Activated naive CD8-positive, alpha-beta T cell treated with anti-CD3 and anti-CD28 coated beads, Interleukin-2, amount 10 ng/mL, durations not matched to agents 7 days and 5 days (primary cell): ENCODE measurements at regions of chr14 and their contacts with region 1.

Region 1: DNA sequence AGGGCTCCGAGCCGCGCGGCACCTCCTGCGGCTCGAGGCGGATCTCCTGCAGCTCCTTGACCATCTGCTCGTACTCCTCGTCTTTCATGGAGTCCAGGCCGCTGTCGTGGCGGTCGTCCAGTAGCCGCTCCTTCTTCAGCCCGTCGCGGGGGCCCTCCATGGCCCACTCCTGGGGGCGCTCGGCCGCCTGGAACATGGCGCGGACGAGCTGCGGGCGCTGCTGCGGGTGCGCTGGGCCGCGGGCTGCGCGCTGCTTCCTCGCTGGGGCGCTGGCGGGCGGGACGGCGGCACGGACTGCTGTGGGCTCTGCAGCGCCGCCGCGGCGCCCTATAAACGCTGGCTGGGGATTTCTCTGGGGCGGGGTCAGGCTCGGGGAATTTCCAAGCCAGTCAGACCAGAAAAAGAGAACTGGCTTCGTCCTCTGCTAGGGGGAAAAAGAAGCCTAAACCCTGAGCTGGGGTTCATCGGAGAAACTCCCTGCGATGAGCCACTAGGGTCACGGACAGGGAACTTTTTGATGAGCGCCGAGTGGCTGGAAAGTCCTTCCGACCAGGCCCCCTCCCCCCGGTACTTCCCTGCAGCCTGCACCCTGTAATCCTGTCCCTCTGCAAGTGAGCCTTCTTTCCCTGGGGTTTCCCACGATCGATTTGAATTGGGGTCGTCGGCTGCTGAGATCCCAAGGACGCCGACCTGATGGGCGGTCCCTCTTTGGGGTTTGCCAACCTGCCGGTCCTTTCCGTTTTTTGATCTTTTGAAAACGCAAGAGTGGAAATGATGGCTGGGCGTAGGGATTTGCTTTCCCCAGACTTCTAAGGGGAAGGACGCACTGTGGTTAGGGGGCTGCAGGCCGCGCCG is at the start of gene NFKBIA:
- DNase-seq: peak; percentile 94
- ATAC-seq: peak; percentile 72
- H3K4me3 Mint-ChIP-seq: peak within 1 kb of the TSS; percentile 92
- H3K27ac Mint-ChIP-seq: peak within 1 kb of the TSS; percentile 96
- H3K4me1 Mint-ChIP-seq: peaks cover 47% of the 10 kb centered on the region
- H3K27me3 Mint-ChIP-seq: no peaks in the 10 kb centered on the region
- total RNA-seq, gene NFKBIA: 85.5 to 88.1 TPM

Region 2: GRCh38 chr14:35121887-35122695 is 282.6 kb before region 1 on chr14 and contains the starts of genes PPP2R3C and PRORP:
- POLR2A ChIA-PET with region 1: interaction called, 32 read pairs
- DNase-seq: peak; percentile 86
- ATAC-seq: peak; percentile 91
- H3K4me3 Mint-ChIP-seq: peak within 1 kb of the TSS; percentile 96
- H3K27ac Mint-ChIP-seq: peak within 1 kb of the TSS; percentile 99
- H3K4me1 Mint-ChIP-seq: peaks cover 40% of the 10 kb centered on the region
- H3K27me3 Mint-ChIP-seq: no peaks in the 10 kb centered on the region
- total RNA-seq, gene PPP2R3C: 34.0 to 39.1 TPM
- total RNA-seq, gene PRORP: 27.8 to 30.2 TPM

Region 3: DNA sequence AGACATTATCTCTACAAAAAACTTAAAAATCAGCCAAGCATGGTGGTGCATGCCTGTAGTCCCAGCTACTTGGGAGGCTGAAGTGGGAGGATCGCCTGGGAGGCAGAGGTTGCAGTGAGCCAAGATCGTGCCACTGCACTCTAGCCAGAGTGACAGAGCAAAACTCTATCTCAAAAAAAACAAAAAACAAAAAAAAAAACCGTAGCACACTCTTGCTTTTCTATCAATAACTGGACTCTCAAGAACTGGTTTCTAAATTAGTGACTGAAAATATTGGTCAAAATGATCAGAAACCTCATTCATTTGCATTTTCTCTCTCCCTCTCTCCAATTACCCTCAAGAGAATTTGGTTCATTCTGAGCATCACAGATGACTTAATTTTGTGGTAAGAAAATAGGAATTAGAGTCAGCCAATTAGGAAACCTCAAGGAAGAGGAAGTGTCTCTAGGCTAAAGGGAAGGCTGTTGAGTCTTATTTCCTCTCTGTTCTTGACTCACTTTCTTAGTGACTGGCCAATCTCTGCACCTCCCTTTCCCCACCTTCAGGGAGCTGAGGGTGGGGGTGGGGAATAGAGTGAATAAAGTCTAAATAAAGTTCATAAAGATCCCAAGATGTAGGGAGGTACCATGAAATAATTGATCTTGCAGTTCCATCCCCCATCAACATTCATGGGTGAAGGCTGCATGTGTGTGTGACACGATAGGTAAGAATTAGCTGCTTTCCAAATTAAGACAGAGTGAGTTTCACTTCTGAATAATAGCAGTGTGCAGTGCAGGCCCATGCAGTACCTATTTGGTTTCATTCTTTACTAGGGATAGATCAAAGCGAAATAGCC is 119.3 kb before region 1 on chr14:
- POLR2A ChIA-PET with region 1: interaction called, 127 read pairs
- DNase-seq: no peak
- ATAC-seq: peak; percentile 79
- H3K4me3 Mint-ChIP-seq: peak overlapping the region; percentile 78
- H3K27ac Mint-ChIP-seq: peak overlapping the region; percentile 91
- H3K4me1 Mint-ChIP-seq: peaks cover 41% of the 10 kb centered on the region
- H3K27me3 Mint-ChIP-seq: no peaks in the 10 kb centered on the region

Region 4: GRCh38 chr14:35320472-35320871 is 84.2 kb before region 1 on chr14:
- POLR2A ChIA-PET with region 1: interaction called, 11 read pairs
- DNase-seq: no peak
- ATAC-seq: no peak
- H3K4me3 Mint-ChIP-seq: no peak overlapping the region
- H3K27ac Mint-ChIP-seq: peak overlapping the region; percentile 45
- H3K4me1 Mint-ChIP-seq: peaks cover 8% of the 10 kb centered on the region
- H3K27me3 Mint-ChIP-seq: no peaks in the 10 kb centered on the region

Region 5: GRCh38 chr14:35341446-35342159 is 63.1 kb before region 1 on chr14:
- POLR2A ChIA-PET with region 1: interaction called, 50 read pairs
- DNase-seq: no peak
- ATAC-seq: peak; percentile 51
- H3K4me3 Mint-ChIP-seq: peak overlapping the region; percentile 13
- H3K27ac Mint-ChIP-seq: peak overlapping the region; percentile 79
- H3K4me1 Mint-ChIP-seq: peaks cover 31% of the 10 kb centered on the region
- H3K27me3 Mint-ChIP-seq: no peaks in the 10 kb centered on the region

Region 6: DNA sequence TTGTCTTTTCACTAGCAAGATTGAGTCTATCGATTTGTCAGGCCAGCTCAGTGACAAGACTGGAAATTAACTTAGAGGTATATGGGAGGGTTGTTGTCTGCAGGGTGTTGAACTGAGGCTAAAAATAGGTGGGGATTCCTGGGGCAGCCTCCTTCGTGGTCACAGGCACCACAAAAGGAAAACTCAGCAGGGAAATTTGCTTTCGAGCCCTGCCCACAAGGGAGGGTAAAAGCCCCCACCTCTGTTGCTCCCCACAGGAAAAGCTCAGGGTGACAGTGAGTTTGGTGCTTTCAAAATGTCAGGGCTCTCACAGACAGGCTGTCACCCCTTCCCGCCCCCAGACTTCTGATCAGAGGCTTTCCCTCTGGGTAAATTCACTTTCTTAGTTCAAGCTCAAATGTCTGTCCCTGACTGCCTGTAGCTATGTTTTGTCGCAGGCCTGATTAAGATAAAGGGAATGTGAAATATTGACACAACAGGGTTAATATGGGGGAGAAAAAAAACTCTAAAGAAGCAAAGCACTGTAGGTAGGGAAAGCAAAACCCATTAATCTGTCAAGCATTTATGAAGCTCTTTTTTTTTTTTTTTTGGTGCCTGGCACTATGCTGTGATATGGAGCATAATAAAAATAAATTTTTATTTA is 11.6 kb after region 1 on chr14:
- POLR2A ChIA-PET with region 1: interaction called, 75 read pairs
- DNase-seq: peak; percentile 51
- ATAC-seq: peak; percentile 32
- H3K4me3 Mint-ChIP-seq: peak overlapping the region; percentile 56
- H3K27ac Mint-ChIP-seq: peak overlapping the region; percentile 70
- H3K4me1 Mint-ChIP-seq: peaks cover 33% of the 10 kb centered on the region
- H3K27me3 Mint-ChIP-seq: no peaks in the 10 kb centered on the region

Region 7: DNA sequence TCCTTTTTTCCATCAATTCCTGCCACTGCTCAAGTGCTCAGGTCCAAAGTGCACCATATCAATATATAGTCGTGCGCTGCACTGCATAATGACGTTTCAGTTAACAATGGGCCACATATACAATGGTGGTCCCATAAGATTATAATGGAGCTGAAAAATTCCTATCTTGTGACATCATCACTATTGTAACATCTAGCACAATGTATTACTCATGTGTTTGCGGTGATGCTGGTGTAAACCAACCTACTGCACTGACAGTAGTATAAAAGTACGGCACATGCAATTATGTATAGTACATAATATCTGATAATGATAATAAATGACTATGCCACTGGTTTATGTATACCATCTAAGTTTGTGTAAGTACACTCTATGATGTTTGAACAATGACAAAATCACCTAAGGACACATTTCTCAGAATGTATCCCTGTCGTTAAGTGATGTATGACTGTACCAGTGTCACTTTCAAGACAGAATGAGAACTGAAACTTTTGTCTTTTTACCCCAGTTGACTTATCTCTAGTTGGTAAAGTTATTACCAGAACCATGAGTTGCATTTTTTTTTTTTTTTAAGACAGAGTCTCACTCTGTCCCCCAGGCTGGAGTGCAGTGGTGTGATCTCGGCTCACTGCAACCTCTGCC is 75.6 kb after region 1 on chr14:
- POLR2A ChIA-PET with region 1: no interaction called
- DNase-seq: no peak
- ATAC-seq: no peak
- H3K4me3 Mint-ChIP-seq: no peak overlapping the region
- H3K27ac Mint-ChIP-seq: no peak overlapping the region
- H3K4me1 Mint-ChIP-seq: no peaks in the 10 kb centered on the region
- H3K27me3 Mint-ChIP-seq: peaks cover 23% of the 10 kb centered on the region

Region 8: DNA sequence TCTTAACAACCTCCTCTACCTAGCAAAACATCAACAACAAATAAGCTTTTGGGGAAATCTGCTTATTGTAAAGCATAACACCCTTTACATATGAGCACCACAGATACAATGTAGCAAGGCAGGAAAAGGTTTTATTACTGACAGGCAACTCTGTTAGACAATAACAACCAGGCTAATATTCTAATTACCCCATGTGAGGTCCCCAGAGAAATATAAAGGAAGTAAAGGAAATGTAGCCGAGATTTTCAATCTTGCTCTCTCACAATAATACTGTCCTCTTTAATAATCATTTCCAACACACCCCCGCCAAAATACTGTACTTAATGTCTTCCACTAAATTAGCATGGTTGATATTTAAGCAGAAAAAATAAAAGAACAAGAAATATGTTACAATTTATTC is 115.3 kb after region 1 on chr14:
- POLR2A ChIA-PET with region 1: no interaction called
- DNase-seq: no peak
- ATAC-seq: no peak
- H3K4me3 Mint-ChIP-seq: no peak overlapping the region
- H3K27ac Mint-ChIP-seq: no peak overlapping the region
- H3K4me1 Mint-ChIP-seq: no peaks in the 10 kb centered on the region
- H3K27me3 Mint-ChIP-seq: peaks cover 19% of the 10 kb centered on the region

Region 9: GRCh38 chr14:35725930-35726329 is 321.3 kb after region 1 on chr14:
- POLR2A ChIA-PET with region 1: no interaction called
- DNase-seq: no peak
- ATAC-seq: no peak
- H3K4me3 Mint-ChIP-seq: no peak overlapping the region
- H3K27ac Mint-ChIP-seq: no peak overlapping the region
- H3K4me1 Mint-ChIP-seq: peaks cover 3% of the 10 kb centered on the region
- H3K27me3 Mint-ChIP-seq: no peaks in the 10 kb centered on the region